ENCODE measurements at regions of chr2 and their contacts with region 1.

Region 1: DNA sequence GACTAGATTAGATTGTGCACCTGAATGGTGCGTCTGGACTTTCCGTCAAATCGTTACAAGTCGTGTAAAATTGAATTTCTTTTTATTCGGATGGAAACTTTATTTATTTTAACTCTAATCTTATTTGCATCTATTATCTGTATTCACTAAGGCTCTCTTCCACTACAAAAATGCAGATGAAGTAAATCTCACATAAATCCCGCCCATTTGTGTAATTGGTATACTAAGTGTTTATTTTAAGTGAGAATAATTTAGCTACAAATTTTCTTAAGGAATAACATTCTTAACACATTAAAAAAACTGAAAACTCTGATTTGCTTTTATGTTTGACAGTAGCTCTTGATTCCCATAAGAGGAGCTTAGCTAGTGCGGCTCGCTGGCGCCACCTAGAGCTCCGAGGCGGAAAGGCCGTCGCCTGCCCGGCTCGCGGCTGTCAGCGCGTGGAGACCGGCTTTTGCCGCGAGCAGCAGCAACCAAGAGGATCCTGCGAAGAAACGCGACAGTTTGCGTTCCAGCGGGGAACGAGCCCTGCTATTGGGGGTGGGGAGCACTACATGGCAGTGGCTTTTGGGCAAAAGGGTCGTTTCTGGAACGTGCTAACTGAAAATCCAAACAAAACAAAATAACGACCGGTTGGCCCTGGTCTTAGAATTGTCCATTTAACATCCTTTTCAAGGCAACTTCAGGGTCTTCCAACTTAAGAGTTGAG is 6.7 kb downstream of the SP9 start:
- DNase-seq: peak; percentile 79 to 92 (median 87)
- ATAC-seq: peak; percentile 70
- H3K4me3 ChIP-seq: no peak overlapping the region
- H3K4me3 Mint-ChIP-seq: peak overlapping the region; percentile 69
- H3K27ac ChIP-seq: no peak overlapping the region
- H3K27ac Mint-ChIP-seq: no peak overlapping the region
- H3K4me1 ChIP-seq: peaks cover 49% of the 10 kb centered on the region
- H3K4me1 Mint-ChIP-seq: peaks cover 36% of the 10 kb centered on the region
- H3K27me3 ChIP-seq: peaks cover 63 to 76% of the 10 kb centered on the region in 2 experiments
- H3K27me3 Mint-ChIP-seq: peaks cover 59% of the 10 kb centered on the region
- CTCF ChIP-seq: peak; percentile 98

Region 2: GRCh38 chr2:173027181-173028128 is 1314.0 kb before region 1 on chr2:
- CTCF ChIA-PET with region 1: interaction called, 11 read pairs
- POLR2A ChIA-PET with region 1: no interaction called
- intact Hi-C with region 1: loop called (anchors 1 kb)
- DNase-seq: peak; percentile 39 to 84 (median 76)
- ATAC-seq: peak; percentile 79
- H3K4me3 ChIP-seq: no peak overlapping the region
- H3K4me3 Mint-ChIP-seq: no peak overlapping the region
- H3K27ac ChIP-seq: no peak overlapping the region
- H3K27ac Mint-ChIP-seq: no peak overlapping the region
- H3K4me1 ChIP-seq: no peaks in the 10 kb centered on the region
- H3K4me1 Mint-ChIP-seq: peaks cover 3% of the 10 kb centered on the region
- H3K27me3 ChIP-seq: peaks cover 0 to 2% of the 10 kb centered on the region in 2 experiments
- H3K27me3 Mint-ChIP-seq: peaks cover 5% of the 10 kb centered on the region
- CTCF ChIP-seq: peak; percentile 96

Region 3: DNA sequence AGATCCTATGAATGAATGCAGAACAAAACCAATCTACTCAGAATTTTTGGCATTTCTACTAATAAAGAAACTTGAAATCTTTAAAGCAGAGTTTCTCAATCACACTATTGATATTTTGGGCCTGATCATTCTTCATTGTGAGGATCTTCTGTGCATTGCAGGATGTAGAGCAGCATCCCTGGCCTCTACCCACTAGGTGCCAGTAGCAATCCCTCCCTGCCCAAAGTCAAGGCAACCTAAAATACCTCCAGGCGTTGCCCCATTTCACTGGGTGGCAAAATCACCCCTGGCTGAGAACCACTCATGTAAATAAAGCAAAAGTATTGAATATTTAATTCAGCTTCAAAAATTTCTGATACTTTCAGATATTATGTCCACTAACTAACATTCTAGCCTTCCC is 589.3 kb before region 1 on chr2:
- CTCF ChIA-PET with region 1: no interaction called
- POLR2A ChIA-PET with region 1: no interaction called
- intact Hi-C with region 1: loop called (anchors 2 to 5 kb)
- DNase-seq: peak in 2 of 9 experiments; percentile 14 to 27
- ATAC-seq: no peak
- H3K4me3 ChIP-seq: no peak overlapping the region
- H3K4me3 Mint-ChIP-seq: no peak overlapping the region
- H3K27ac ChIP-seq: no peak overlapping the region
- H3K27ac Mint-ChIP-seq: no peak overlapping the region
- H3K4me1 ChIP-seq: no peaks in the 10 kb centered on the region
- H3K4me1 Mint-ChIP-seq: no peaks in the 10 kb centered on the region
- H3K27me3 ChIP-seq: no peaks in the 10 kb centered on the region
- H3K27me3 Mint-ChIP-seq: peaks cover 8% of the 10 kb centered on the region
- CTCF ChIP-seq: no peak

Region 4: GRCh38 chr2:173965329-173966025 is 376.0 kb before region 1 on chr2 and contains the start of gene SP3:
- CTCF ChIA-PET with region 1: no interaction called
- POLR2A ChIA-PET with region 1: no interaction called
- intact Hi-C with region 1: loop called in 1 of 2 experiments (anchors 2 kb)
- DNase-seq: peak; percentile 89 to 98 (median 96)
- ATAC-seq: peak; percentile 59
- H3K4me3 ChIP-seq: peak within 1 kb of the TSS; percentile 76 to 89
- H3K4me3 Mint-ChIP-seq: peak within 1 kb of the TSS; percentile 88
- H3K27ac ChIP-seq: peak within 1 kb of the TSS; percentile 86 to 96
- H3K27ac Mint-ChIP-seq: peak within 1 kb of the TSS; percentile 94
- H3K4me1 ChIP-seq: peaks cover 27% of the 10 kb centered on the region
- H3K4me1 Mint-ChIP-seq: peaks cover 33% of the 10 kb centered on the region
- H3K27me3 ChIP-seq: no peaks in the 10 kb centered on the region
- H3K27me3 Mint-ChIP-seq: no peaks in the 10 kb centered on the region
- CTCF ChIP-seq: no peak
- total RNA-seq, gene SP3: 166 to 169 TPM

Region 5: GRCh38 chr2:174248187-174248997 is 93.0 kb before region 1 on chr2 and contains the start of gene OLA1:
- CTCF ChIA-PET with region 1: interaction called, 3 read pairs
- POLR2A ChIA-PET with region 1: no interaction called
- intact Hi-C with region 1: loop called in 1 of 2 experiments (anchors 5 kb)
- DNase-seq: peak; percentile 90 to 98 (median 96)
- ATAC-seq: peak; percentile 96
- H3K4me3 ChIP-seq: peak within 1 kb of the TSS; percentile 78 to 94
- H3K4me3 Mint-ChIP-seq: peak within 1 kb of the TSS; percentile 84
- H3K27ac ChIP-seq: peak within 1 kb of the TSS; percentile 49 to 78
- H3K27ac Mint-ChIP-seq: peak within 1 kb of the TSS; percentile 80
- H3K4me1 ChIP-seq: peaks cover 6% of the 10 kb centered on the region
- H3K4me1 Mint-ChIP-seq: peaks cover 31% of the 10 kb centered on the region
- H3K27me3 ChIP-seq: no peaks in the 10 kb centered on the region
- H3K27me3 Mint-ChIP-seq: no peaks in the 10 kb centered on the region
- CTCF ChIP-seq: no peak
- total RNA-seq, gene OLA1: 35.3 to 38.8 TPM

Region 6: GRCh38 chr2:174282441-174282840 is 59.0 kb before region 1 on chr2:
- CTCF ChIA-PET with region 1: no interaction called
- POLR2A ChIA-PET with region 1: no interaction called
- intact Hi-C with region 1: no loop called
- DNase-seq: no peak
- ATAC-seq: no peak
- H3K4me3 ChIP-seq: no peak overlapping the region
- H3K4me3 Mint-ChIP-seq: no peak overlapping the region
- H3K27ac ChIP-seq: no peak overlapping the region
- H3K27ac Mint-ChIP-seq: no peak overlapping the region
- H3K4me1 ChIP-seq: no peaks in the 10 kb centered on the region
- H3K4me1 Mint-ChIP-seq: no peaks in the 10 kb centered on the region
- H3K27me3 ChIP-seq: peaks cover 0 to 2% of the 10 kb centered on the region in 2 experiments
- H3K27me3 Mint-ChIP-seq: peaks cover 35% of the 10 kb centered on the region
- CTCF ChIP-seq: no peak

Region 7: DNA sequence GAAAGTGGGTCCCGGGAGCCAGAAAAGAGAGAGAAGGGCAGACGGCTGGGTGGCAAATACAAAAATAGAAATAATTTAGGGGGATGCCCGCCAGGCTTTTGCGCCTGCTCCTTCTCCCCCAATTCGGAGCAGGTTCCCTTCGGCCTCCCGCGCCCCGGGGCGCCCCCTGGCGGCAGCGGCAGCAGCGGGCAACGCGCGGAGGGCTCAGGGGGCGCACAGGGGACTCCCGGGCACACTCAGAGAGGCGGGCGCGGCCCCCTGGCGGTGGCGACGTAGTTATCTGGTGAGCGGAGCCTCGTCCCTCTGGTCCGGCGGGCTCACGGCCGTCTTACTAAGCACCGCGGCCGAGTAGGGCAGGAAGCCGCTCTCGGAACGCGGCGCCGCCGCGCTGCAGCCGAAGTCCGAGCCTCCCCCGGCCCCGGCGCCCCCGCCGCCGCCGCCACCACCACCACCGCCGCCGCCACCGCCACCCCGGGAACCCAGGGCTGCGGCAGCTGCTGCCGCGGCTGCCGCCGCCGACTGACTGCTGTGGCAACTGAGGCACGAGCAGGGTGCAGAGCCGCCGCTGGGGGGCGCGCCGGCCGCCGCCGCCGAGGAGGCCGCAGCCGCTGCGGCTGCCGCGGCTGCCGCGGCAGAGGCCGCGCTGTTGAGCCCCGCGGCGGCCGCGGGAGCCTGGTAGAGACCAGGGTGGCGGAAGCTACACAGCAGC is 1738.5 kb after region 1 on chr2:
- CTCF ChIA-PET with region 1: no interaction called
- POLR2A ChIA-PET with region 1: no interaction called
- intact Hi-C with region 1: loop called (anchors 2 to 5 kb)
- DNase-seq: peak in 2 of 9 experiments; percentile 29 to 43
- ATAC-seq: peak; percentile 31
- H3K4me3 ChIP-seq: no peak overlapping the region
- H3K4me3 Mint-ChIP-seq: peak overlapping the region; percentile 51
- H3K27ac ChIP-seq: no peak overlapping the region
- H3K27ac Mint-ChIP-seq: no peak overlapping the region
- H3K4me1 ChIP-seq: peaks cover 11% of the 10 kb centered on the region
- H3K4me1 Mint-ChIP-seq: peaks cover 12% of the 10 kb centered on the region
- H3K27me3 ChIP-seq: peaks cover 77 to 85% of the 10 kb centered on the region in 2 experiments
- H3K27me3 Mint-ChIP-seq: peaks cover 83% of the 10 kb centered on the region
- CTCF ChIP-seq: no peak